PC-9 (cell line): ENCODE measurements at regions of chrX and their contacts with region 1.

Region 1: GRCh38 chrX:129606918-129607317 is 47.8 kb downstream of the APLN start:
- DNase-seq: peak; percentile 48 to 55
- H3K4me3 ChIP-seq: no peak overlapping the region
- H3K27ac ChIP-seq: no peak overlapping the region
- H3K4me1 ChIP-seq: peaks cover 6% of the 10 kb centered on the region; the same call in 1 of the 2 replicates
- H3K27me3 ChIP-seq: no peaks in the 10 kb centered on the region
- CTCF ChIP-seq: peak; percentile 89

Region 2: GRCh38 chrX:129462707-129463106 is 144.2 kb before region 1 on chrX:
- CTCF ChIA-PET with region 1: no interaction called
- POLR2A ChIA-PET with region 1: no interaction called
- intact Hi-C with region 1: no loop called
- DNase-seq: no peak
- H3K4me3 ChIP-seq: no peak overlapping the region
- H3K27ac ChIP-seq: no peak overlapping the region
- H3K4me1 ChIP-seq: no peaks in the 10 kb centered on the region
- H3K27me3 ChIP-seq: no peaks in the 10 kb centered on the region
- CTCF ChIP-seq: peak; percentile 49; the same call in 1 of the 2 replicates

Region 3: DNA sequence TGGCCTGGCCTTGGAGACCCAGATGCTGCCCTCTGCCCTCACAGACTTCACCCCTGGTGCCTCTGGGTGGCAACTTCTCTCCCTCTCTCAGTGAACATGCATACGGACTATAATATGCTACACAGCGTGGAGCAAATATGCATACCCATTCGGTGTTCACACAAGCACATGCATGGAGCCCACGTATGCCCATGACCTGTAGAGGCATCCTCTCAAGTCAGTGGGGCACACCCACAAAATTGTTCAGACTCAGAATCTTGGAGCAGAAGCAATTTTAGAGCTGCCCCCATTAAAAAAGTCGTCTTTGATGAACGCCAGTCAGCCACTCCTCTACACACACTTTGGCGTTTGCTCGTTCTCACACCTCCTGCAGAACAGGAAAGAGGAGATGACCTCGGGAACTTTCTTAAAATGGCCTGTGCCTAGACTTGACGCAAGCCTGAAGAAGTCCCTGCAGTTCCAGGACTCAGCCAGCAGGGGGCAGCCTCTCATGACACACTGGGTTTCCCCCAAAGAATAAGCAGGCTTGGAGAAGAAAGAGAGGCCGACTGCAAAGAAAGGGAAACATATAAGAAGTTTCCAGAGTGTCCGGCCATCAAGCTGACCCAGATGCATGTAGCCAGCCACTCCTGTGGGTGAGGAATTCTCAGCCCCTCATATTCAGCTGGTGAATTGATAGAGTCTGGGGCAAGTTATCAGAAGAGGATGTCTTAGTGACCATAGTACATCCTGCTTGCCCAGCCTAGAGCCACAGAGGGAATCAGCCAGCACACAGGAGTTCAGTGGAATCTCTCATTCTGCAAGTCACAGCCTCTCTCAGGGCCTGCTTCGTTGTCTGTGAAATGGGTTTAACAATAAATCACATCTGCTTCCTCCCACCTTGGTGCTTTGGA is 30.5 kb after region 1 on chrX:
- CTCF ChIA-PET with region 1: interaction called, 10 read pairs
- POLR2A ChIA-PET with region 1: no interaction called
- intact Hi-C with region 1: loop called (anchors 1 kb)
- DNase-seq: peak; percentile 41 to 66
- H3K4me3 ChIP-seq: no peak overlapping the region
- H3K27ac ChIP-seq: no peak overlapping the region
- H3K4me1 ChIP-seq: no peaks in the 10 kb centered on the region
- H3K27me3 ChIP-seq: no peaks in the 10 kb centered on the region
- CTCF ChIP-seq: peak; percentile 99

Region 4: GRCh38 chrX:129726307-129727111 is 119.6 kb after region 1 on chrX:
- CTCF ChIA-PET with region 1: interaction called, 5 read pairs
- POLR2A ChIA-PET with region 1: no interaction called
- intact Hi-C with region 1: loop called (anchors 1 kb)
- DNase-seq: peak in 1 of 2 experiments; percentile 74
- H3K4me3 ChIP-seq: no peak overlapping the region
- H3K27ac ChIP-seq: no peak overlapping the region
- H3K4me1 ChIP-seq: 0 out of 2 replicates have a peak, but pooled peaks cover 4% of the 10 kb centered on the region
- H3K27me3 ChIP-seq: no peaks in the 10 kb centered on the region
- CTCF ChIP-seq: peak; percentile 88

Region 5: DNA sequence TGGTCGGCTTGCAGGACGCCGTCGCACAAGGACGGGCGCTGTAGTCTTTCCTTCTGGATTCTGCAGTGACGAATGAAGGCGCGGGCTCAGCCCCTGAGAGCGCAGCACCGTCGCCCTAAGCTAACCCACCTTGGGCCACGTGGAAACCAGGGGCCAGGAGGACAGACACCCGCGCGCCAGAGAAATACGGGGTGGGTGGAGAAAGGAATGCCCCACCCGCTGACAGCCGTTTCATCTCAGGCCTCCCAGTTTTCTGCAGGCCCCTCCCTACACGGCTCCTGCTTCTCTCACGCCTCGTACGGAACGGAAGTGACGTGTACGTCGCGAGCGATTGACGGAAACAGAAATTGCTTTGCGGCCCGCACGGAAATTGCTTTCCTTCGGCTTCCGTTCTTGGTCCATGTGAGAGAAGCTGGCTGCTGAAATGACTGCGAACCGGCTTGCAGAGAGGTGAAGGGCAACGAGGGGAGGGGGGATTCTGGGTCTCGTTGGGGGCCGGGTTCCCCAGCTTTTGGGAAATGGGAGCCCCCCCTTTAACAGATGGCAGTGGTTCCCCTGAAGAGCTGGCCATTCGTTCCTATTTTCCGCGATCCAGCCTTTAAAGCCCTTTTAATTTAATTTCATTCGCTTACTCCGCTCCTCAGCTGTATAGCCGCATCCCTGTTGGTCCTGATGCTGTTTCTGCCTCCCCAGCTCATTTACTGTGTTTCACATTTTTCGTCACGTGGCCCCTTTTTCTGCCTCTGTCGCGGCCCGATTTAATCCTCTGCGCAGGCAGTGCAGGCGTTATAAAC is 299.1 kb after region 1 on chrX and contains the start of gene UTP14A:
- CTCF ChIA-PET with region 1: no interaction called
- POLR2A ChIA-PET with region 1: interaction called, 24 read pairs
- intact Hi-C with region 1: no loop called
- DNase-seq: peak; percentile 89 to 93
- H3K4me3 ChIP-seq: peak within 1 kb of the TSS; percentile 91
- H3K27ac ChIP-seq: peak within 1 kb of the TSS; percentile 72
- H3K4me1 ChIP-seq: peaks cover 22% of the 10 kb centered on the region
- H3K27me3 ChIP-seq: no peaks in the 10 kb centered on the region
- CTCF ChIP-seq: no peak
- total RNA-seq, gene UTP14A: 44.6 and 55.4 TPM in 2 replicates

Region 6: GRCh38 chrX:129982274-129983251 is 375.6 kb after region 1 on chrX and contains the start of gene BCORL1:
- CTCF ChIA-PET with region 1: no interaction called
- POLR2A ChIA-PET with region 1: no interaction called
- intact Hi-C with region 1: loop called (anchors 2 kb)
- DNase-seq: peak; percentile 85 to 93
- H3K4me3 ChIP-seq: no peak within 1 kb of the TSS; the same call in 1 of the 2 replicates
- H3K27ac ChIP-seq: no peak within 1 kb of the TSS
- H3K4me1 ChIP-seq: 0 out of 2 replicates have a peak, but pooled peaks cover 5% of the 10 kb centered on the region
- H3K27me3 ChIP-seq: peaks cover 5% of the 10 kb centered on the region; the same call in 1 of the 2 replicates
- CTCF ChIP-seq: no peak
- total RNA-seq, gene BCORL1: 32.2 TPM in 2 replicates

Region 7: GRCh38 chrX:130196466-130196865 is 589.5 kb after region 1 on chrX:
- CTCF ChIA-PET with region 1: no interaction called
- POLR2A ChIA-PET with region 1: no interaction called
- intact Hi-C with region 1: loop called (anchors 1 kb)
- DNase-seq: no peak
- H3K4me3 ChIP-seq: no peak overlapping the region
- H3K27ac ChIP-seq: no peak overlapping the region
- H3K4me1 ChIP-seq: no peaks in the 10 kb centered on the region
- H3K27me3 ChIP-seq: no peaks in the 10 kb centered on the region
- CTCF ChIP-seq: no peak

Region 8: GRCh38 chrX:130916636-130917422 is 1309.9 kb after region 1 on chrX:
- CTCF ChIA-PET with region 1: interaction called, 11 read pairs
- POLR2A ChIA-PET with region 1: no interaction called
- intact Hi-C with region 1: loop called (anchors 2 kb)
- DNase-seq: peak; percentile 17 to 38
- H3K4me3 ChIP-seq: no peak overlapping the region
- H3K27ac ChIP-seq: no peak overlapping the region
- H3K4me1 ChIP-seq: no peaks in the 10 kb centered on the region
- H3K27me3 ChIP-seq: 0 out of 2 replicates have a peak, but pooled peaks cover 6% of the 10 kb centered on the region
- CTCF ChIP-seq: peak; percentile 96